Activated naive CD4-positive, alpha-beta T cell treated with anti-CD3 and anti-CD28 coated beads for 36 hours (primary cell): ENCODE measurements at regions of chr17 and their contacts with region 1.

Region 1: GRCh38 chr17:50547035-50547735 is at the start of gene SPATA20:
- DNase-seq: peak; percentile 92
- H3K4me3 Mint-ChIP-seq: peak within 1 kb of the TSS; percentile 74
- H3K27ac Mint-ChIP-seq: peak within 1 kb of the TSS; percentile 67
- H3K4me1 Mint-ChIP-seq: peaks cover 9% of the 10 kb centered on the region
- H3K27me3 Mint-ChIP-seq: peaks cover 2% of the 10 kb centered on the region
- total RNA-seq, gene SPATA20: 15.8 to 16.1 TPM

Region 2: GRCh38 chr17:50593321-50593720 is 46.1 kb after region 1 on chr17:
- CTCF ChIA-PET with region 1: no interaction called
- intact Hi-C with region 1: no loop called
- DNase-seq: no peak
- H3K4me3 Mint-ChIP-seq: no peak overlapping the region
- H3K27ac Mint-ChIP-seq: no peak overlapping the region
- H3K4me1 Mint-ChIP-seq: no peaks in the 10 kb centered on the region
- H3K27me3 Mint-ChIP-seq: no peaks in the 10 kb centered on the region

Region 3: GRCh38 chr17:50613007-50613992 is 66.1 kb after region 1 on chr17:
- CTCF ChIA-PET with region 1: interaction called, 3 read pairs
- intact Hi-C with region 1: loop called (anchors 1 kb)
- DNase-seq: peak; percentile 35
- H3K4me3 Mint-ChIP-seq: no peak overlapping the region
- H3K27ac Mint-ChIP-seq: no peak overlapping the region
- H3K4me1 Mint-ChIP-seq: peaks cover 3% of the 10 kb centered on the region
- H3K27me3 Mint-ChIP-seq: peaks cover 3% of the 10 kb centered on the region

Region 4: DNA sequence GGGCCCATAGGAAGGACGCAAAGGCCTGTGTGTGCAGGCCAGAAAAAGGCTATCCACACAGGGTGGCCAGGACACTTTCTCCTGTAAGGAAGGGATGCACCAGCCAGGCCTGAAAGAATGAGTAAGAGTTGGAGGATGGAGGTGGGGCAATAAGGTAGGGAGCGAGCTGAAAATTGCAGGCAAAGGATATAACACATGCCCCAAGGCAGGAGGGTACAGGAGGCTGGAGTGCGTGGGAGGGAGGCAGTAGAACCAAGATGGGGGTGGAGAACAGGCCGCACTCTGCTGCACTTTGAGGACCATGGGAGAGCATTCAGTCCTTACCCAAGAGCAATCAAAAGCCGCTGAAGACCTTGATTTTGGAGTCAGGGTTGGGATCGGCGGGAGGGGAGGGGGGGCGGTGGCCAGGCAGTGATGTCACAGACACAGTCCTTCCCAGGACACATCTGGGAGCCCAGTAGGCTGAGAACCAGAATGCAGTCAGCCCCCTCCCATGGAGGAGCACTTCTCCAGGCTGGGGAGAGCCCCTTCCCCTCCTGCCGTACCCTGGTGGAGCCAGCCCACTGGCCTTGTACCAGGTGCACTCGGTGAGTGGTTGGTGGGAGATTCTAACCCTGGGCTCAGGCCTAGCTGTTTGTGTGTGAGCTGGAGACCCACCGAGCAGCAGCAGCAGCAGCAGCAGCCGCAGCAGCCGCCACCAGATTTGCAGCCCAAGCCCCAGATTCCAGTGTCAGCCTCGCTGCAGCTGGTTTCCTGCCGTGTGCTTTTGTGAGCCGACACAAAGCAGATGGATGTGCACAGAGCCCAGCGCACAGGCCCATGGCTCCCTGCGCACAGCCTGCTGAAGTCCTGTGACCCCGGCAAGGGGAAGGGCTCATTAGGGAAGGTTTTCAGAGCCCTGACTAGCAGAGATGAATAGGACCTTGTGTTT is 143.0 kb after region 1 on chr17:
- CTCF ChIA-PET with region 1: interaction called, 4 read pairs
- intact Hi-C with region 1: loop called (anchors 1 kb)
- DNase-seq: no peak
- H3K4me3 Mint-ChIP-seq: no peak overlapping the region
- H3K27ac Mint-ChIP-seq: no peak overlapping the region
- H3K4me1 Mint-ChIP-seq: no peaks in the 10 kb centered on the region
- H3K27me3 Mint-ChIP-seq: no peaks in the 10 kb centered on the region

Region 5: DNA sequence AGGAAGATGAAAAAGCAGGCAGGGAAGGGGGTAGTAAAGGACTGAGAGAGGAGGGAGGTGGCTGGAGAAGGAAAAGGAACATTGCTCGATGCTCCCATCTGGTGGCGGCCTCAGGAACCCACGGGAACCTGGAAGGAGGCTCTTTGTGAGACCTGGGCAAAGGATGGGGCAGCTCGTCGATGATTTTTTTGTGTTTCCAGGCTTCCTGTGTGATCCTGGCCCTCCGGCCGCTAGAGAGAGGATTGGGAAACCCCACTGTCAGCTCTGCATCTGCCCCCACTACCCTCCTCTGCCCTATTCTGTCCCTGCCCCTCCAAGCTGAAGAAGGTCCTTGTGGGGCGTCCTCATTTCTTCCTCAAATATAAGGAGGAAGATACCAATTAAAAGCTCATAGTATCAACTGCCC is 294.8 kb after region 1 on chr17:
- CTCF ChIA-PET with region 1: no interaction called
- intact Hi-C with region 1: loop called (anchors 1 kb)
- DNase-seq: peak; percentile 73
- H3K4me3 Mint-ChIP-seq: no peak overlapping the region
- H3K27ac Mint-ChIP-seq: no peak overlapping the region
- H3K4me1 Mint-ChIP-seq: peaks cover 3% of the 10 kb centered on the region
- H3K27me3 Mint-ChIP-seq: no peaks in the 10 kb centered on the region